ENCODE measurements at regions of chr5 and their contacts with region 1.

Region 1: DNA sequence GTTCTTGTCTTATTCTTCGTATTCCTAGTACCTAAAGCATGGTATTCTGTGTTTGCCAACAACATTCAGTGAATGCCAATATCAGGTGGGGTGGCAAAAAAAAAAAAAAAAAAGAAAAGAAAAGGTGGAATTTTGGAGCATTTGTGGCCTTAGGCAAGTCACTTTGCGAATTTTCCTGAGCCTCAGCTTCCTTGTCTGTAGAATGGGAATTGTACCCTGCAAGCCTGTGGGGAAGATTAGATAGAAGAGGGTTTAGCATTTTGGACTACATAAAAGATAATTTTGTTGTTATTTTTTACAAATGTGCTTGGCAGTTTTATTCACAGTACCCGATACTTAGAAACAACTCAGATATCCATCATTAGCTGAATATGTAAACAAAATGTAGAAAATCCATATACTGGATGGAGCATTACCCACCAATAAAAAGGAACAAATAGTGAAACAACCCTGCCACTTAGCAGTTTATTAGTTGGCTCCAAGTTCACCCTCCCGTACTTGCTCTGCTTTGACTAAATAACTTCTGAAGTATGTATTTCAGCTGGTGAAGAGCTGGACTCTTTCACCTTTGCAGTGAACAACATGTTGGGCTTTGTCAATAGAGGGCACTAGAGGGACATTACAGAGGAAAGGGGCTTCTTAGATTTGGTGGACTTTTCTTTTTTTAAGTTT is 13.6 kb downstream of the UBE2D2 start:
- DNase-seq: peak; percentile 52
- ATAC-seq: peak; percentile 73
- H3K4me3 ChIP-seq: no peak overlapping the region
- H3K27ac ChIP-seq: peak overlapping the region; percentile 7
- H3K4me1 ChIP-seq: peaks cover 58% of the 10 kb centered on the region
- H3K27me3 ChIP-seq: no peaks in the 10 kb centered on the region
- CTCF ChIP-seq: peak; percentile 63
- EP300 ChIP-seq: no peak
- POLR2A ChIP-seq: no peak
- RAD21 ChIP-seq: no peak

Region 2: DNA sequence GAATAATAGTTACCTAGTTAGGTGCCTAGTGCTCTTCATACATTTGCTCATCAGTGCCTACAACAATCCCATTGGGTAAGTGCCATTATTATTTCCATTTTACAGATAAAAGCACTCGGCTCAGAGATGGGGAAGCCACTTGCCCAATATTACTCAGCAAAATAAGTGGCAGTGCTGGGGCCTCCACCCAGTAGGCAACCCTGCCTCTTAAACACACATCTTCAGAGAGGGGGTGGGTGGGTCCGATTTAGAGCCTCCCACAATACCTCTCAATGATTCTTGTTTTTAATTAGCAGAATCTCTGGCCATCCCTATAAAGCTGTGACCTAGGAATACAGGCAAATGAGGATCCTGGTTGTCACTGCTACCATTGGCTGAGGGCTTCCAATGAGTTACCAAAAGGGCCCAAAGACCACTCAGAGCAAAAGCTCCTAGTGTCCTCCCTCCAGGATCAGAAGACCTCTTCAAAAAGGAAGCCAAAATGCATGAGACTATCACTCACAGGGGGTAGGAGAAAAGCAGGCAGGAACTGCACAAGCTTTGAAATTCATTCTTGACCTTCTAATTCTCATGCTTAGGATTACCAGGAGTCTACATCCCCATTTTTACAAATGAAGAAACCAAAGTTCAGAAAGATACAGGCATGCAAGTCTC is 49.7 kb before region 1 on chr5:
- CTCF ChIA-PET with region 1: no interaction called
- POLR2A ChIA-PET with region 1: no interaction called
- in situ Hi-C with region 1: no loop called
- intact Hi-C with region 1: loop called (anchors 5 kb)
- DNase-seq: no peak
- ATAC-seq: peak; percentile 58
- H3K4me3 ChIP-seq: peak overlapping the region; percentile 49 to 73 (median 69)
- H3K27ac ChIP-seq: peak overlapping the region; percentile 60
- H3K4me1 ChIP-seq: peaks cover 74% of the 10 kb centered on the region
- H3K27me3 ChIP-seq: no peaks in the 10 kb centered on the region; a peak in 1 of 5 replicates
- CTCF ChIP-seq: no peak
- EP300 ChIP-seq: no peak
- POLR2A ChIP-seq: no peak
- RAD21 ChIP-seq: no peak

Measured in HepG2 (cell line).